CD8-positive, alpha-beta memory T cell (primary cell): ENCODE measurements at regions of chr17 and their contacts with region 1.

Region 1: DNA sequence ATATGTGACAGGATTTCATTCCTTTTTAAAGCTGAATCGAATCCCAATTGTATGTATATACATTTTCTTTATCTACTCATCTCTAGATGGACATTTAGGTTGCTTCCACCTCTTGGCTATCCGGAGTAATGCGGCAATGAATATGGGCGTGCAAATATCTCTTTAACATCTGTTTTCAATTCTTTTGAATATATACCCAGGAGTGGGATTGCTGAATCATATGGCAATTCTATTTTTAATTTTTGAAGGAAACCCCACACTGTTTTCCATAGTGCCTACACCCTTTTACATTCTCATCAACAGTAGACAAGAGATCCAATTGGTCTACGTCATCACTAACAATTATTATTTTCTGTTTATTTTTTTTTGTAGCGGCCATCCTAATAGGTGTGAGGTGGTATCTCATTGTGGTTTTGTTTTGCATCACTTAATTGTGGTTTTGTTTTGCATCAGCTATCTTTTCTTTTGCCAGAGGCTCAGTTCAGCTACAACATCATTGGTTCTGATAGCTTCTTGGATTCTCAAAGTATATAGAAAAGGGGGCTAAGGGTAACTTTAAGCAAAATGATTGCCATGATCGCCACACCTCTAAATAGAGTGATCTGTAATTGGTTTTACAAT is 25.6 kb upstream of the MAP2K6 start:
- DNase-seq: no peak
- H3K4me3 ChIP-seq: no peak overlapping the region
- H3K4me3 Mint-ChIP-seq: no peak overlapping the region
- H3K27ac ChIP-seq: no peak overlapping the region
- H3K27ac Mint-ChIP-seq: no peak overlapping the region
- H3K4me1 ChIP-seq: no peaks in the 10 kb centered on the region
- H3K4me1 Mint-ChIP-seq: no peaks in the 10 kb centered on the region
- H3K27me3 ChIP-seq: no peaks in the 10 kb centered on the region
- H3K27me3 Mint-ChIP-seq: peaks cover 5 to 30% of the 10 kb centered on the region in 2 donors

Region 2: DNA sequence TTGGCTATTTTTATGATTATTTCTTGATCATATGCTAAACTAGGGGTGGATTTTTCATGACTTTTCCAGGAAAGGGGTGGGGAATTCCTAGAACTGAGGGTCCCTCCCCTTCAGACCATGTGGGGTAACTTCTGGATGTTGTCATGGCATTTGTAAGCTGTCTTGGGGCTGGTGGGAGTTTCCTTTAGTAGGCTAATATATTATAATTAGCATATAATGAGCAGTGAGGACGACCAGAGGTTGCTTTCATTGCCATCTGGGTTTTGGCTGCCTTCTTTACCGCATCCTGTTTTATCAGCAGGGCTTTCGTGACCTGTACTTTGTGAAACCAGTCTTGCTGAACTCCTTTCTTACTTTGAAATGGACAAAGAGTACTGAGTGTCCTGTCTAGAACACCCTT is 21.6 kb before region 1 on chr17:
- CTCF ChIA-PET with region 1: no interaction called
- POLR2A ChIA-PET with region 1: no interaction called
- DNase-seq: no peak
- H3K4me3 ChIP-seq: no peak overlapping the region
- H3K4me3 Mint-ChIP-seq: no peak overlapping the region
- H3K27ac ChIP-seq: no peak overlapping the region
- H3K27ac Mint-ChIP-seq: peak overlapping the region in 1 of 8 donors; percentile 24
- H3K4me1 ChIP-seq: no peaks in the 10 kb centered on the region
- H3K4me1 Mint-ChIP-seq: peaks cover 0 to 3% (median 0%) of the 10 kb centered on the region in 3 donors
- H3K27me3 ChIP-seq: no peaks in the 10 kb centered on the region
- H3K27me3 Mint-ChIP-seq: peaks cover 12 to 23% of the 10 kb centered on the region in 2 donors

Region 3: GRCh38 chr17:69404382-69404781 is 15.4 kb after region 1 on chr17:
- CTCF ChIA-PET with region 1: interaction called, 20 read pairs
- POLR2A ChIA-PET with region 1: no interaction called
- DNase-seq: no peak
- H3K4me3 ChIP-seq: no peak overlapping the region
- H3K4me3 Mint-ChIP-seq: no peak overlapping the region
- H3K27ac ChIP-seq: no peak overlapping the region
- H3K27ac Mint-ChIP-seq: no peak overlapping the region
- H3K4me1 ChIP-seq: no peaks in the 10 kb centered on the region
- H3K4me1 Mint-ChIP-seq: peaks cover 0 to 5% (median 0%) of the 10 kb centered on the region in 3 donors
- H3K27me3 ChIP-seq: no peaks in the 10 kb centered on the region
- H3K27me3 Mint-ChIP-seq: peaks cover 0 to 2% of the 10 kb centered on the region in 2 donors